IMR-90 (cell line): ENCODE measurements at regions of chr4 and their contacts with region 1.

Region 1: GRCh38 chr4:129707949-129708348 is 612.0 kb downstream of the C4orf33 start:
- DNase-seq: no peak
- ATAC-seq: no peak
- H3K4me3 ChIP-seq: no peak overlapping the region
- H3K27ac ChIP-seq: no peak overlapping the region
- H3K4me1 ChIP-seq: no peaks in the 10 kb centered on the region
- H3K27me3 ChIP-seq: no peaks in the 10 kb centered on the region
- CTCF ChIP-seq: no peak
- POLR2A ChIP-seq: no peak
- RAD21 ChIP-seq: no peak

Region 2: GRCh38 chr4:129672941-129673340 is 35.0 kb before region 1 on chr4:
- CTCF ChIA-PET with region 1: no interaction called
- POLR2A ChIA-PET with region 1: no interaction called
- dilution Hi-C with region 1: no loop called
- in situ Hi-C with region 1: no loop called
- intact Hi-C with region 1: no loop called
- DNase-seq: no peak
- ATAC-seq: no peak
- H3K4me3 ChIP-seq: no peak overlapping the region
- H3K27ac ChIP-seq: no peak overlapping the region
- H3K4me1 ChIP-seq: no peaks in the 10 kb centered on the region
- H3K27me3 ChIP-seq: no peaks in the 10 kb centered on the region
- CTCF ChIP-seq: no peak
- POLR2A ChIP-seq: no peak
- RAD21 ChIP-seq: no peak

Region 3: GRCh38 chr4:129738175-129738574 is 30.2 kb after region 1 on chr4:
- CTCF ChIA-PET with region 1: no interaction called
- POLR2A ChIA-PET with region 1: no interaction called
- dilution Hi-C with region 1: no loop called
- in situ Hi-C with region 1: no loop called
- intact Hi-C with region 1: loop called (anchors 1 kb)
- DNase-seq: no peak
- ATAC-seq: no peak
- H3K4me3 ChIP-seq: no peak overlapping the region
- H3K27ac ChIP-seq: no peak overlapping the region
- H3K4me1 ChIP-seq: no peaks in the 10 kb centered on the region
- H3K27me3 ChIP-seq: no peaks in the 10 kb centered on the region
- CTCF ChIP-seq: no peak
- POLR2A ChIP-seq: no peak
- RAD21 ChIP-seq: no peak